CD8-positive, alpha-beta T cell (primary cell): ENCODE measurements at regions of chr1 and their contacts with region 1.

Region 1: DNA sequence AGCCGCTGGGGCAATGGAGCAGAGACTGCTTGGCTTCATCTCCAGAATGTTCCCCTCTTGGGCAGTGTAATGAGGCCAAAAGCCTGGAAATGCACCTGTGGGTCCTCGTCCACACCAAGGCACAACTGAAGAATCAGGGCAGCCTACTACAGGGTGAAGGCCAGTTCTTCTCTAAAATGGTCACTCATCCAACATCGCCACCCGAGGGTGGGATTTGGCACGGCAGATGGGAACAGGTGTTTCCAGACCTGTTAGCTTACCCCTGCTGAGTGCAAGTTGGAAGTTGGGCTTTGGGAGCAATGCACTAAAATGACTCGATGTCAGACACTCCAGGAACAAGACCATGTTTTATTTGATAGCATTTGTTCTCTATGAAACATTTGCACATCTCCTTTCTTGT is 543.7 kb downstream of the NPHP4 start:
- DNase-seq: peak in 8 of 9 experiments; percentile 16 to 70 (median 38)
- ATAC-seq: no peak
- H3K4me3 ChIP-seq: no peak overlapping the region
- H3K4me3 Mint-ChIP-seq: no peak overlapping the region
- H3K27ac ChIP-seq: no peak overlapping the region
- H3K27ac Mint-ChIP-seq: no peak overlapping the region
- H3K4me1 ChIP-seq: no peaks in the 10 kb centered on the region
- H3K4me1 Mint-ChIP-seq: no peaks in the 10 kb centered on the region
- H3K27me3 ChIP-seq: no peaks in the 10 kb centered on the region
- H3K27me3 Mint-ChIP-seq: no peaks in the 10 kb centered on the region
- CTCF ChIP-seq: no peak

Region 2: DNA sequence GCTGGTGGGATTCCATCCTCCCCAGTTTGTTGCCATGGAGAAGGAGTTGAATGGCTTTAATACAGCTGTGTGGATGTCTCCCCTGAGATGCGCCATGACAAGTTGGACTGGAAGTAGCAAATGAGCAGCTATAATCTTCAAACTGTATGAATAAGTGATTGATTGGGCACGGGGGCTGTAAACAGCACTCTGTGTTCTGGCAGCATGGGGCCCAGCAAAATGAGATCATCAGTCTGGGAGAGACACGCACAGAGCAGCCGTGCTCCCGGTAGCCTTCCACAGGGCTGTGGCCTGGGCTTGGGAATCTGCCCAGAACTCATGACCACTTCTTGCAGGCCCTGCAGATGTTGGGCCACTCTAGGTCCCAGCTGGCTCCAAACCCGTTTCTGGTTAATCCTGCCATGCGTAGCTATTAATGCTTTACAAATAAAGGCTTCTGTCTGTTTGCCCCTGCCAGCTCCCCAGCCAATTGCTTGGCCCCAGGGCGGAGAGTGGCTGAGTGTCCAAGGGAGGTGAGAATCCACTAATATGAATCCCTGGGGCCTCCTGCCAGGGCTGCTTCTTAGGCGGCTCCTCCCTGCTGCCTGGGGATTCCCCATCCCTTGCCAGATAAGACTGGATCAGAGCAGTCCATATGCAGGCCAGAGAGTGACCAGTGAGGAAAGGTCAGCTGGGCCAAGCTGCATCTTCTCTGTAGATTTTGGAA is 151.2 kb before region 1 on chr1:
- CTCF ChIA-PET with region 1: no interaction called
- POLR2A ChIA-PET with region 1: no interaction called
- intact Hi-C with region 1: loop called in 1 of 2 experiments (anchors 10 kb)
- DNase-seq: no peak
- ATAC-seq: no peak
- H3K4me3 ChIP-seq: no peak overlapping the region
- H3K4me3 Mint-ChIP-seq: no peak overlapping the region
- H3K27ac ChIP-seq: no peak overlapping the region
- H3K27ac Mint-ChIP-seq: no peak overlapping the region
- H3K4me1 ChIP-seq: no peaks in the 10 kb centered on the region
- H3K4me1 Mint-ChIP-seq: no peaks in the 10 kb centered on the region
- H3K27me3 ChIP-seq: no peaks in the 10 kb centered on the region
- H3K27me3 Mint-ChIP-seq: no peaks in the 10 kb centered on the region
- CTCF ChIP-seq: no peak